ENCODE measurements at regions of chr6 and their contacts with region 1.

Region 1: GRCh38 chr6:24699521-24700359 is 19.2 kb downstream of the C6orf62 start:
- DNase-seq: no peak
- ATAC-seq: peak in 1 of 8 donors; percentile 30
- H3K4me3 ChIP-seq: no peak overlapping the region
- H3K27ac ChIP-seq: peak overlapping the region in 3 of 10 donors; percentile 11 to 24 (median 12)
- H3K4me1 ChIP-seq: peaks cover 0 to 18% (median 4%) of the 10 kb centered on the region in 9 donors
- H3K27me3 ChIP-seq: no peaks in the 10 kb centered on the region
- CTCF ChIP-seq: no peak

Region 2: DNA sequence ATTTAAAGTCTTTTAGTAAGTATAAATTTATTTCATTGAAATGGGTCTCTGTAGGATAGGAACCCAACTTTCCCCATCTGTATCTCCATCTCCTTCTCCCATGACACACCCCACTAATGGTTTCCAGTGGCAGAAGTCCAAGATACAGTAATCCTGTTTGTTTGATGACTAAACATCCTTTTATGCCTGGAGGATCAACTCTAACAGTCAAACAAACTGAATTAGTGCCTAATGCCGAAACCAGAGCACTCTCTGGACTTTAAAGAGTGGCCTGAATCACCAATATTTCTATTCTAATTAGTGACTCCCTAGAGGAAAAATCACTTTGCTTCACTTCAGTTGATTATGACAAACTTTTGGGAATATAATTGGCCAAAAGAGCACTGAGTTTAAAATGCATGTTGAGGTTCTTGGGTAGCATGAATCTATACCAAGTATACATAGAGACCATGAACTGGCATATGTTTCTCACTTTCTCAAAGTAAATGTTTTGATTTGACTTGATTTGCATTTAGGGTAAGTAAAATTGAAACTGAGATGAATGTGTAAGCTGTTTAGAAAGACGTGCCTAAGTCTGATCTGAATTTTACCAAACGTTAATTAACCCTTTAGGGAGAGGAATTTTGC is 1350.1 kb before region 1 on chr6:
- intact Hi-C with region 1: no loop called
- DNase-seq: no peak
- ATAC-seq: peak in 1 of 8 donors; percentile 39
- H3K4me3 ChIP-seq: no peak overlapping the region
- H3K27ac ChIP-seq: no peak overlapping the region
- H3K4me1 ChIP-seq: no peaks in the 10 kb centered on the region
- H3K27me3 ChIP-seq: no peaks in the 10 kb centered on the region
- CTCF ChIP-seq: no peak

Region 3: DNA sequence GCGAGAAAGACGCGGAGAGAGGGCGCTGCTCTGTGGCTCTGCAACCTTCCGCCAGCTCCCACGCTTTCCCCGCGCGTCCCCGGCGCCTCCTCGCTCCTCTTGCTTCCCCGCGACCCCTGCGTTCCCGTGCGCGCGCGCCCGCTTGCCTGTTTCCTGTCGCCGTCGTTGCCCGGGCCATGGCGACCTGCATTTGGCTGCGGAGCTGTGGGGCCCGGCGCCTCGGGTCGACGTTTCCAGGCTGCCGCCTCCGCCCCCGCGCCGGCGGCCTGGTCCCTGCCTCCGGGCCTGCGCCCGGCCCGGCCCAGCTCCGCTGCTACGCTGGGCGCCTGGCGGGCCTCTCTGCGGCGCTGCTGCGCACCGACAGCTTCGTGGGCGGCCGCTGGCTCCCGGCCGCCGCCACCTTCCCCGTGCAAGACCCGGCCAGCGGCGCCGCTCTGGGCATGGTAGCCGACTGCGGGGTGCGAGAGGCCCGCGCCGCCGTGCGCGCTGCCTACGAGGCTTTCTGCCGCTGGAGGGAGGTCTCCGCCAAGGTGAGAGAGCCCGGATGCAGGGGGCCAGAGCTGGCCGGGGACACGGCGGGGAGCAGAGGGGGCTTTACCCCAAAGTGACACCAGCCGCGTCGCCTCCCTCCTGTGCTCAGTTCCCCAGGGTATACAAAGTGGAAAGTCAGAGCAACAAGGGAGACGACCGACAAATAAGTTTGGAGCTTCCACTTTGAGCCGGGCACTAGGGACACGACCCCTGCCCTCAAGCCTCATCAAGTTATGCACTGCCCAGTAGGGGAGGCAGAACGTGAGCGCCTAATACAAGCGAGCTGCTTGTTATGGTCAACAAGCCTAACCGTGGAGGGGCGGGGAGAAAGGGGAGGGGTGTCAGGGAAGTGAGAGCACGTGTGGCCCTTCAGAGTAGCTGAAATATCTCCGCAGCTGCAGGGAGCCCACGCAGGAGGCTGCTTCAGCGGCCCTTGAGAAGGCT is 204.6 kb before region 1 on chr6 and contains the start of gene ALDH5A1:
- intact Hi-C with region 1: loop called in 1 of 10 experiments (anchors 10 kb)
- DNase-seq: peak; percentile 79 to 81
- ATAC-seq: peak; percentile 85 to 91 (median 88)
- H3K4me3 ChIP-seq: peak within 1 kb of the TSS; percentile 33 to 89 (median 69)
- H3K27ac ChIP-seq: peak within 1 kb of the TSS; percentile 16 to 92 (median 82)
- H3K4me1 ChIP-seq: peaks cover 0 to 22% (median 15%) of the 10 kb centered on the region in 9 donors
- H3K27me3 ChIP-seq: peaks cover 0 to 15% (median 0%) of the 10 kb centered on the region in 7 donors
- CTCF ChIP-seq: peak in 6 of 9 donors; percentile 10 to 49 (median 35)
- total RNA-seq, gene ALDH5A1: 23.1 to 45.5 (median 30.0) TPM

Region 4: DNA sequence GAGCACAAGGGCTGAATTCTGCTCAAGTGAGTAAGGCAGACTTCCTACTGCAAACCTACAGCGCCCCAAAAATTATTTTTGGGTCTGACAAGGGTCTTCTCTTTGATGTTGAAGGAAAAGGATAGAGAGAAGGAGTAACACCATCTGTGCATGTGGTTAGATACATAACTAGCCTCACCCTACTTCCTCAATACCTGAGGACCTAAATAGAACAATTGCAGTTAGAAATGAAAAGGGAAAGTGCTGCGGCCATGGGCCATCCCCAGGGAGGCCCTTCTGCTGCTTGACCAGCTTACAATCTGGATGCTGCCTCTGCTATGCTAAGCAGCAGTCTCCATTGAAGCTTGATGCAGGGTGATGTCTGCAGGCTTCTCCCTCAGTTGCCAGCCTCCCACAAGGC is 162.2 kb after region 1 on chr6:
- intact Hi-C with region 1: no loop called
- DNase-seq: no peak
- ATAC-seq: no peak
- H3K4me3 ChIP-seq: no peak overlapping the region
- H3K27ac ChIP-seq: no peak overlapping the region
- H3K4me1 ChIP-seq: peaks cover 0 to 53% (median 5%) of the 10 kb centered on the region in 9 donors
- H3K27me3 ChIP-seq: no peaks in the 10 kb centered on the region
- CTCF ChIP-seq: no peak